Activated CD8-positive, alpha-beta T cell treated with anti-CD3 and anti-CD28 coated beads, Interleukin-2, amount 10 ng/mL, durations not matched to agents 7 days and 5 days (primary cell): ENCODE measurements at regions of chr2 and their contacts with region 1.

Region 1: GRCh38 chr2:113080134-113080533 is 12.4 kb downstream of the IL1F10 start:
- DNase-seq: peak; percentile 61
- ATAC-seq: peak; percentile 42
- H3K4me3 Mint-ChIP-seq: no peak overlapping the region
- H3K27ac Mint-ChIP-seq: no peak overlapping the region
- H3K4me1 Mint-ChIP-seq: peaks cover 19% of the 10 kb centered on the region
- H3K27me3 Mint-ChIP-seq: peaks cover 8% of the 10 kb centered on the region

Region 2: GRCh38 chr2:112749755-112750559 is 330.2 kb before region 1 on chr2:
- CTCF ChIA-PET with region 1: no interaction called
- POLR2A ChIA-PET with region 1: no interaction called
- DNase-seq: peak; percentile 87
- ATAC-seq: peak; percentile 93
- H3K4me3 Mint-ChIP-seq: no peak overlapping the region
- H3K27ac Mint-ChIP-seq: peak overlapping the region; percentile 28
- H3K4me1 Mint-ChIP-seq: peaks cover 37% of the 10 kb centered on the region
- H3K27me3 Mint-ChIP-seq: no peaks in the 10 kb centered on the region

Region 3: DNA sequence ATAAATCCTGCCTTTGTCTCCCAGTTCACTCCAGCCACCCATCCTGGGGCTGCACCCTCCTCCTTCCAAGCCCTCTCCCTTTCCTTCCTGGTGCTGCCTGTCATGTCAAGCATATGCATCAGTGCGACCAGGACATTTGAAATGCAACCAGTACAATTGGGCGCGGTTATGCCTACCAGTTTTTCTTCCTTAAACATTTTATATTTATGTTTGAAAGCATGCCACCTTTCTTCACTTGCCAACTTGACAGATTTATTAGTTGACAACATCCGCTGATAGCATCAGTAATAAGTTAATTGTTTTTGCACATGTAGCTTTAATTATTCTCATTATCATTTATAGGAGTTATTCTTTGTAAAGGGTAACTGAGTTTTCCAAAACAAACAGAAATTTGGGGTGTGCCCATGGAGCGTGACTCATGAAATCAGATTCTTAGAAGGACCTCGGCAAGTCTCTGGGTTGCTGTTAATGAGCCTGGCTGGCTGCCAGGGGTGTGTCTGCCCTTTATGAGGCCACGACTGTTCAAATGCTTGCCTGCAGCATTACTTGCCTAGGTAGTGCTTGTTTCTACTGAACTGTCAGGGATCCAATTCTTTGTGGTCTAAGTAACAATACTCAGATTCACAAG is 210.8 kb before region 1 on chr2:
- CTCF ChIA-PET with region 1: no interaction called
- POLR2A ChIA-PET with region 1: no interaction called
- DNase-seq: no peak
- ATAC-seq: no peak
- H3K4me3 Mint-ChIP-seq: no peak overlapping the region
- H3K27ac Mint-ChIP-seq: no peak overlapping the region
- H3K4me1 Mint-ChIP-seq: peaks cover 2% of the 10 kb centered on the region
- H3K27me3 Mint-ChIP-seq: peaks cover 52% of the 10 kb centered on the region

Region 4: GRCh38 chr2:113068718-113069435 is 11.3 kb before region 1 on chr2:
- CTCF ChIA-PET with region 1: interaction called, 15 read pairs
- POLR2A ChIA-PET with region 1: no interaction called
- DNase-seq: no peak
- ATAC-seq: no peak
- H3K4me3 Mint-ChIP-seq: no peak overlapping the region
- H3K27ac Mint-ChIP-seq: no peak overlapping the region
- H3K4me1 Mint-ChIP-seq: peaks cover under 1% of the 10 kb centered on the region
- H3K27me3 Mint-ChIP-seq: peaks cover 8% of the 10 kb centered on the region

Region 5: DNA sequence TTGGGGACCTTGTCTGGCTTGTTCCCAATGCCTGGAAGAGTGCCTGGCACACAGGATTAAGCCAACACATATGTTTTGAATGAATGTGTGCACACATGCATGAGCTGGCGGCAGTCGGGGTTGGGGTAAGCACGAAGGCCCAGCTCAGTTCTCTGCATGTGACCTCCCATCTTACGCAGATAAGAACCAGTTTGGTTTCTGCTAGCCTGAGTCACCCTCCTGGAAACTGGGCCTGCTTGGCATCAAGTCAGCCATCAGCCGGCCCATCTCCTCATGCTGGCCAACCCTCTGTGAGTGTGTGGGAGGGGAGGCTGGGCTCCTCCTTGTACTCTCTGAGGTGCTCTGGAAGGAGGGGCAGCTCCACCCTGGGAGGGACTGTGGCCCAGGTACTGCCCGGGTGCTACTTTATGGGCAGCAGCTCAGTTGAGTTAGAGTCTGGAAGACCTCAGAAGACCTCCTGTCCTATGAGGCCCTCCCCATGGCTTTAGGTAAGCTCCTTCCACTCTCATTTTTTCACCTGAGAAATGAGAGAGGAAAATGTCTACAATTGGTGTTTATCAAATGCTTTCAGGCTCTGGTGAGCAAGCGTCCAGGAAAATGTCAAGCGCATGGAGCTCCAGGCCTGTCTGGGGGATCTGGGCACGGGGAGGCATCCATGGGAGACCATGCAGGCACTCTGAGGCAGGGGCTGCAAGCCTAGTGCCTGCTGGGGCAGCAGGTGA is 37.6 kb after region 1 on chr2:
- CTCF ChIA-PET with region 1: interaction called, 13 read pairs
- POLR2A ChIA-PET with region 1: interaction called, 3 read pairs
- DNase-seq: no peak
- ATAC-seq: no peak
- H3K4me3 Mint-ChIP-seq: no peak overlapping the region
- H3K27ac Mint-ChIP-seq: no peak overlapping the region
- H3K4me1 Mint-ChIP-seq: peaks cover 17% of the 10 kb centered on the region
- H3K27me3 Mint-ChIP-seq: peaks cover 10% of the 10 kb centered on the region

Region 6: GRCh38 chr2:113181258-113182051 is 101.3 kb after region 1 on chr2:
- CTCF ChIA-PET with region 1: interaction called, 22 read pairs
- POLR2A ChIA-PET with region 1: interaction called, 4 read pairs
- DNase-seq: peak; percentile 56
- ATAC-seq: peak; percentile 43
- H3K4me3 Mint-ChIP-seq: peak overlapping the region; percentile 83
- H3K27ac Mint-ChIP-seq: peak overlapping the region; percentile 83
- H3K4me1 Mint-ChIP-seq: peaks cover 93% of the 10 kb centered on the region
- H3K27me3 Mint-ChIP-seq: no peaks in the 10 kb centered on the region

Region 7: DNA sequence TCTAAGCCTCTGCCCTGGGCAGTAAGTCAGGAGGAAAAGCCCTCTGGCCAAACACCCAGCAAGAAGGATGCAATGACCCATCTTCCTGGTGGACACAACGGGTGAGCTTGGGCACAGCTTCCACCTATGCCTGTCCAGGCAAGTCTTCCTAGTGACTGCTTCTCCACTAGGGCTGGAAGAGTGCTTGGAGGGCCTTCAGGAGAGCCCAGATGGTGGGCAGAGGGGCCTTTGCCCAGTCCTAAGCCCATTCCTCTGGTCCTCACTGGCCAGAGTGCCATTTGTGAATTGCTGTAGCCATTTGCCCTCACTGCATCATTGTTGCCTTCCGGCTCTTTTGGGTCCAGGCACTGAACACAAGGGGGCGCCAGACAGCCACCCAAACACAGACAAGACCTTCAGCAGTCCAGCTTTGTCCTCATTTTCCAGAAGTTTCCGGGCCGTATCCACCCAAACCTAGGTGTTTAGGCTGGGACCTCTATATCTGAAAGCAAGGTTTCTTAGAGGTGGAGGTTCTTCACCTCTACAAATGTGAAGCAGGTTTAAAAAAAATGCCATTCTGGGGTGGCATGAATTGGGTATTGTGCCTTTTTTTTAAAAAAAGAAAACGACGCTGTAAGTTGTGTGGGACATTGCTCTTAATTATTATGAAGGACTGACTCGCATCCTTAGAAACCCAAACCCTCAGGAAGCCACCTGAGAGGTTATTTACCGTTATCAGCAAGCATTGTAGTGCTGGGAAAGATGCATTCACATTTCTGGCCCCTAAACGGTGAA is 169.1 kb after region 1 on chr2:
- CTCF ChIA-PET with region 1: interaction called, 12 read pairs
- POLR2A ChIA-PET with region 1: no interaction called
- DNase-seq: peak; percentile 86
- ATAC-seq: peak; percentile 69
- H3K4me3 Mint-ChIP-seq: no peak overlapping the region
- H3K27ac Mint-ChIP-seq: peak overlapping the region; percentile 77
- H3K4me1 Mint-ChIP-seq: peaks cover 56% of the 10 kb centered on the region
- H3K27me3 Mint-ChIP-seq: no peaks in the 10 kb centered on the region

Region 8: GRCh38 chr2:113390124-113390849 is 310.2 kb after region 1 on chr2:
- CTCF ChIA-PET with region 1: interaction called, 17 read pairs
- POLR2A ChIA-PET with region 1: no interaction called
- DNase-seq: peak; percentile 73
- ATAC-seq: peak; percentile 90
- H3K4me3 Mint-ChIP-seq: peak overlapping the region; percentile 74
- H3K27ac Mint-ChIP-seq: peak overlapping the region; percentile 82
- H3K4me1 Mint-ChIP-seq: peaks cover 15% of the 10 kb centered on the region
- H3K27me3 Mint-ChIP-seq: peaks cover 20% of the 10 kb centered on the region

Region 9: GRCh38 chr2:113720167-113720566 is 640.0 kb after region 1 on chr2:
- CTCF ChIA-PET with region 1: no interaction called
- POLR2A ChIA-PET with region 1: no interaction called
- DNase-seq: no peak
- ATAC-seq: no peak
- H3K4me3 Mint-ChIP-seq: no peak overlapping the region
- H3K27ac Mint-ChIP-seq: no peak overlapping the region
- H3K4me1 Mint-ChIP-seq: no peaks in the 10 kb centered on the region
- H3K27me3 Mint-ChIP-seq: no peaks in the 10 kb centered on the region